ENCODE measurements at regions of chr22 and their contacts with region 1.

Region 1: DNA sequence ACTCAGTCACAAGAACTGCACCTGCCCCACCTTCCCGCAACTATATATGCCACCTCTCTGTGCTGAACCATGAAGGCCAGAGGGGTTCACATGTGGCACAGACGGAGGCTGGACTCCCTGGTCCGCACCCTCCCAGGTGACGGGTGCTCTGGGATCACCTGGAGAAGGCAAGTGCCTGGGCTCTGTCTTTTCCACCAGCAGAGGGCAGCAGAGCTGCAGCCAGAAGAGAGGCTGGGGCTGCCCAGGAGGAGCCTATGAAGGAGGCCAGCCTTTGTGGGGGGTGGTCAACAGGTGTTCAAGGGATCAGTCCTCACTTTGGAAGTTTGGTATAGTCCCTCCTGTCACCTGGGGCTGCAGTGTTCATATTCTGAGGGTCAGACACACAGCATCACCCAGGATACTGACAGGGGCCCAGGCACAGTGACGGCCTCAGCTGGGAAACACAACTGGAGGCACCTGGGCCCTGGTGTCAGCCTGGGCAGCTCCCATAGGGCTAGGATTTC is 39.2 kb upstream of the IGLL5 start:
- DNase-seq: peak; percentile 59
- CTCF ChIP-seq: peak; percentile 88

Region 2: GRCh38 chr22:22680396-22680795 is 168.0 kb before region 1 on chr22:
- CTCF ChIA-PET with region 1: no interaction called
- POLR2A ChIA-PET with region 1: no interaction called
- DNase-seq: no peak
- CTCF ChIP-seq: no peak

Region 3: DNA sequence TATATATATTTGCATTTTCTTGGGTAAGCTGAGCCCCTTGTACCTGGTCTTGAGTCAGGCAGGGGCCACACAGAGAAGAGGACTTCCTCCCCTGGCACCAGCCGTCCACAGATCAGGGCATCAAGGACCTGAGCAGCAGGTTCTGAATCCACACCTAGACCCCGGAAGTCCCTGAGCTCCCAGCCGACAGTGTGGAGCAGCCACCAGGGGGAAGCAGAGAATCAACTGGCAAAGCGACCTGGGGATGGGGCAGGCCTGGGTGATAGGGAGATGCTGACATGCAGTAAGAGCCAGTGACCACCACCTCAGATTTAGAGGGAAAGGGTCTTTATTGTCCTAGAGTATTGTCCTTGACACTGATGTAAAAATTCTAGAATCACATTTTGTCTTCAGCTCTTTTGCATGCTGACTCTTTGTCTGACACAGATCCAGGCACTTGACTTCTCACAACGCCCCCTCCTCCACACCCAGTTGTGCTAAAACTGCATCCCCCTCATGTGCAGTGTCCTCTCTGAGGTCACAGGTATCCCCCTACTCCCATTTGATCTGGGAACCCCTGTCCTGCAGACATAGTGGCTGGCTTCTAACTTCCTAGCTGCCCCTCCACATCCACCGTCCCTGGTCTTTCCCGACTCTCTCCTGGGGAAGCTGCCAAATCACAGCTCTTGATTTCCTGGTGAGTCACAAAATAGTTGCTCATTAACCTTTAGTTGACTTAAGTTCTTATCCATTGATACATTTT is 94.7 kb before region 1 on chr22:
- CTCF ChIA-PET with region 1: interaction called, 16 read pairs
- POLR2A ChIA-PET with region 1: no interaction called
- DNase-seq: peak; percentile 87
- CTCF ChIP-seq: peak; percentile 89

Region 4: DNA sequence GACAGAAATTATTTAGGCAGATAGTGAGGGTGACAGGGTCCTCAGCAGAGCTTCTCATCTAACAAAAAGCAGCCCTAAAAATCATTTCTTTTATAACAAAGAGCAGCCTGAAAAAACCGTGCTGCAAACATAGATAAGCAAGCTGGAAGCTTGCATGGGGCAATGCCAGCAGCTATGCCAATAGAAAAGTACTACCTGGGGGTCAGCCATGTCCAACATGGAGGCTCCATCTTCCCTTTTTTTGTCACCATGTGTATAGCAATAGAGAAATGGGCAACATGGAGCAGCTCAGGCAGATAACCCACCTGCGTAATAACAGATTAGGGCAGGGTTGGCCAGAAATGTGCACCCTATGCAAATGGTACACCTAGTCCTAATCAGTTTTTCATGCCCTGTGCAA is 18.2 kb before region 1 on chr22:
- CTCF ChIA-PET with region 1: interaction called, 10 read pairs
- POLR2A ChIA-PET with region 1: no interaction called
- DNase-seq: no peak
- CTCF ChIP-seq: no peak

Region 5: GRCh38 chr22:22865311-22866072 is 17.1 kb after region 1 on chr22:
- CTCF ChIA-PET with region 1: interaction called, 26 read pairs
- POLR2A ChIA-PET with region 1: no interaction called
- DNase-seq: peak; percentile 45
- CTCF ChIP-seq: no peak

Region 6: DNA sequence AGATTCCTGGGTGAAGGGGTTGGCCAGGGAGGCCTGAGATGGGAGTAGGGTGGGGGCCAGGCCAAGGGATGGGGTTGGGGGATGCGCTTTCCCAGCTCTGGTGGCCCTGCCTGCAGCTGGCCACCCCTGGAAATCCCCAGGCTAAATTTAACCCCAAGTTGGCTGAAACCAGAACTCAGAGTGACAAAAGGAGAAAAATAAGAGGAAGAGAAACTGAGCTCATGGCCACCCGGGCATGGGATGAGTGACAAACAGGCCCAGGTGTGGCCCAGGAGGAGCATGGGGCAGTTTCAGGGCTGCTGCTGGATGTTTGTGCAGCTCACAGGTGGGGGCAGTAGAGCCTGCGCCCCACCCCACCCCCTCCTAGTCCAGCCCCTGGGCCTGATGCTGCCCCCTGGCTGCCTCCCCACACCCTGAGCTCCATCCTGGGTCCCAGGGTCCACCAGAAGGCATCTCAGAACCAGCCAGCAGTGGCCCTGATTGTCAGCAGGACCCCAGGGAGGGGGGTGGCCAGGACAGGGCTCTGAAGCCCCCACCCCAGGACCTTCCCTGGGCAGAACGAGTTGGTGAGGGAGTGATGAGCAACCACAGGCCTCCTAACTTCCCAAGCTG is 87.2 kb after region 1 on chr22:
- CTCF ChIA-PET with region 1: interaction called, 12 read pairs
- POLR2A ChIA-PET with region 1: no interaction called
- DNase-seq: peak; percentile 95
- CTCF ChIP-seq: peak; percentile 49